ENCODE measurements at regions of chr4 and their contacts with region 1.

Region 1: DNA sequence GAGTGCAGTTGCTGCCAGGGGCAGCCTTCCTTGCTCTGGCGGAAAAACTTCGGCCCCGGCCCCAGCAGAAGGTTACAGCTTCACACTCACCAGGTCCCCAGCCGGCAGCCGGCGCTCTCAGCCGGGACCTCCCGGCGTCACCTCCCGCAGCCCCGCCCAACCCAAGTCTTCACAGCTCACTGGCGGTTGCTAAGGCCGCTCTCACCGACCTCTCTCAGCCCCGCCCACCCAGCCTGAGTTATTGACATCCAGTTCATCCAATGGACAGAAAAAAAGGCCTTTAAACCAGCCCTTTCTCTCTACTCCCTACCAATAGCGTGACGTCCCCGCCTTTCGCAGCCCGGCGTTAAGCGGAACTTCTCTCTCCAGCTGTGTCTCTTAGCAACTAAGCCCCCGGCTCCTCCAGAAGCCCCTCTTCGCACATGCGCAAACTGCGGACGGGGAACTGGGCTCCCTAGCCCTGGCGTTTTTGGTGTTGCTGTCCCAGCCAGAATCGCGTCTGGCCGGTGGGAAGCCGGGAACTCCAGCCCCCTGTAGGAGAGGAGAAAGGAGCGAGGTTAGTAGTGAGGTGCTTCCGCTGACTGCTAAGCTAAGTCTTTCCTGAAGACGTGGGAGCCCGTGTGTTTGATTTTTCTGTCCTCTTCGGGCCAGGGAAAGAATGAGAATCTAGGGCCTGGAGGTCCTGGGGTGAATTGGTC is at the start of gene BBS12:
- DNase-seq: peak; percentile 99
- total RNA-seq, gene BBS12: 3.1 TPM

Region 2: DNA sequence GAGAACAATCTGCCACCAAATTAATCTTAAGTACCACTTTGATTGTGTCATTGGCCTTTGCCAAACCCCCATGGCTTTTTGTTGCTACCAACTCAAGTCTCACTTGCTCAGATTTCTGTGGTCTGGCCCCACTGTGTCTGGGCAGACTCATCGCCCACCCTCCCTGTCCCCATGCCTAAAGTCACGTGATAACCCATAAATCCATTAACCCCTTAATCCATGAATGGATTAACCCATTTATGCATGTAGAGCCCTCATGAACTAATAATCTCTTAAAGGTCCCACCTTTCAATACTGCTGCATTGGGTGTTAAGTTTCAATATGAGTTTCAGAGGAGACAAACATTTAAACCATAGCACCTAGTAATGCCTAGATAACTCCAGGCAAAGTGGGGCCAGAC is 658.9 kb before region 1 on chr4:
- intact Hi-C with region 1: no loop called
- DNase-seq: no peak

Region 3: GRCh38 chr4:122403861-122404260 is 328.6 kb before region 1 on chr4:
- intact Hi-C with region 1: no loop called
- DNase-seq: no peak

Region 4: DNA sequence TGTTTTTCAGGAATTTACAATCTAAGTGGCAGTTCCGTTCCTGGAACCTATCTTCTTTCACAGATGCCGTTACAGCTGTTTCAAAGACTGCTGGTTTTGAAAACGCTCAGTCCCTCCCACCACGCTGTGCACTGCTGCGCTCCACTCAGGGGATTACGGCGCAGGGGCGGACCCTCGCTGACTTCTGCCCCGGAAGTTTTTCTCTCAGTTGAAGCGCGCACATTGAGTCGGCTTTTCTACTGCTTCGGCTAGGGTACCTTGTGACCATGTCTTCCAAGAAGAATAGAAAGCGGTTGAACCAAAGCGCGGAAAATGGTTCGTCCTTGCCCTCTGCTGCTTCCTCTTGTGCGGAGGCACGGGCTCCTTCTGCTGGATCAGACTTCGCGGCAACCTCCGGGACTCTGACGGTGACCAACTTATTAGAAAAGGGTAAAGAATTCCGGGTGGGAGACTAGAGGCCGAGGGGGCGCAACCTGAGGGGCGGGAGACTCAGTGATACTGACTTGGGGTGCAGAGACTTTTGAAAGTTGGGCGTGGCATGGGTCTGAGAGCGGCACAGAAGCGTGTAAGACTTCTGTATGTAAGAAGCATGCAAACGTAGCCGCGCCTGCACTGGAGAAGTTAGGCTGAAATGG is 190.5 kb after region 1 on chr4:
- intact Hi-C with region 1: loop called (anchors 2 kb)
- DNase-seq: peak; percentile 92

Measured in cardiac septum (tissue), 1 donor.